Activated CD4-positive, alpha-beta T cell treated with anti-CD3 and anti-CD28 coated beads for 36 hours (primary cell): ENCODE measurements at regions of chr9 and their contacts with region 1.

Region 1: DNA sequence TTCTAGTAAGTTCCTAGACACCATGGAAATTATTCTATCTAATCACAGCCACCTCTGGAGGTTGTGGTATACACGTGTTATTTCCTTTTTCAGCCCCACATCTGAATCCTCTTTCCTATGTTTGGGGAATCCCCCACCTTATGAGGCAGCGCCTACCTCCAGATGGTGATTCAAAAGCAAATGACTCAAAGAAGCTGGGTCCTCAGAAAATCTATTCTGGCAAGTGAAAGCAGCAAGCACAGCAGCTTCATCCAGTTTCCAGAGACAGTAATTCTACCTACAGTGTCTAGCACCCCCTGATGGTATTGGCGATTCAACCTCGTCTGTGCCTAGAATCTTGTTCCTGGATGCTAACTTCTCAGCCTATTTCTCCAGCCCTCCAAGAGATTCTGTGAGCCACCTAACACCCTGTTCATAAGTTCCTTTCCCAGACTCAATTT is 43.0 kb downstream of the STRBP start:
- DNase-seq: peak; percentile 76
- ATAC-seq: peak; percentile 95
- H3K4me3 Mint-ChIP-seq: peak overlapping the region; percentile 27
- H3K27ac Mint-ChIP-seq: peak overlapping the region; percentile 86
- H3K4me1 Mint-ChIP-seq: peaks cover 30% of the 10 kb centered on the region
- H3K27me3 Mint-ChIP-seq: no peaks in the 10 kb centered on the region

Region 2: DNA sequence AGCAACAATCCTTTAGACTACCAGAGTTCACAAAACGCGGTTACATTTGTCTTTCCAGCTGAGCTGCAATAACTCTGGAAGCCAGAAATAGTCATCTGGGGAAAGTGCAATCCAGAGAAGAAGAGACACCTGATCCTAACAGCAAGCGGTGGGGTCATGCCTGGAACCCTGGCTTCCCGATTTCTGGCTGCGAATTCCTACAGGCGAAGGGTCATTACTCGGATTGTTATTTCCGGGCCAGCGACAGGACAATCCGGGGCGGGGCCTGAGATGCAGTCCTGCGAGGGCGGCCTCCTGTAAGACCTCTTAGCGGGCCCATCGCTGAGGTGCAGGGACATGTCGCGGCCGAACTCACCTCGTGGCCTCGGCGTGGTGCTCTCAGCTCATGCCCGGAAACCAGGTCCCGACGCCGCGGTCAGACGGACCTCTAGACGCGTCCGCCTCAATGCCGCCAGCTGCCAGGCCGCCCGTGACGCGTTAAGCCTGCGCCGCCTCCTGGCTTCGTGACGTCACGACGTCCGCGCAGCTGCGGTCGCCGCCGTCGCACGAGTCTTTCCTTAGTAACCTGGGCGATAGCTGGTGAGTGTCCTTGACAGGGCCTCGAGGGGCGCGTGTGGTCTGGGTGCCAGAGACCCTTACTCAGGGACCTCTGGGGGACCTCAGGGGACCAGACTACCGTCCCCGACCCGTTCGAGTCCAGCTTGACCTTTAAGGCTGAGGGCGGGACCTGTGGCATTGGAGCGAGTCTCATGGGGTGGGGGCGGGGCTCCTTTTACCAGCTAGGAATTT is 960.8 kb before region 1 on chr9 and contains the starts of genes MRRF and RBM18:
- CTCF ChIA-PET with region 1: no interaction called
- POLR2A ChIA-PET with region 1: no interaction called
- intact Hi-C with region 1: loop called in 1 of 2 experiments (anchors 10 kb)
- DNase-seq: peak; percentile 93
- ATAC-seq: peak; percentile 83
- H3K4me3 Mint-ChIP-seq: peak within 1 kb of the TSS; percentile 98
- H3K27ac Mint-ChIP-seq: peak within 1 kb of the TSS; percentile 99
- H3K4me1 Mint-ChIP-seq: peaks cover 44% of the 10 kb centered on the region
- H3K27me3 Mint-ChIP-seq: no peaks in the 10 kb centered on the region
- total RNA-seq, gene MRRF: 57.3 to 61.5 TPM
- total RNA-seq, gene RBM18: 22.3 to 28.6 TPM

Region 3: DNA sequence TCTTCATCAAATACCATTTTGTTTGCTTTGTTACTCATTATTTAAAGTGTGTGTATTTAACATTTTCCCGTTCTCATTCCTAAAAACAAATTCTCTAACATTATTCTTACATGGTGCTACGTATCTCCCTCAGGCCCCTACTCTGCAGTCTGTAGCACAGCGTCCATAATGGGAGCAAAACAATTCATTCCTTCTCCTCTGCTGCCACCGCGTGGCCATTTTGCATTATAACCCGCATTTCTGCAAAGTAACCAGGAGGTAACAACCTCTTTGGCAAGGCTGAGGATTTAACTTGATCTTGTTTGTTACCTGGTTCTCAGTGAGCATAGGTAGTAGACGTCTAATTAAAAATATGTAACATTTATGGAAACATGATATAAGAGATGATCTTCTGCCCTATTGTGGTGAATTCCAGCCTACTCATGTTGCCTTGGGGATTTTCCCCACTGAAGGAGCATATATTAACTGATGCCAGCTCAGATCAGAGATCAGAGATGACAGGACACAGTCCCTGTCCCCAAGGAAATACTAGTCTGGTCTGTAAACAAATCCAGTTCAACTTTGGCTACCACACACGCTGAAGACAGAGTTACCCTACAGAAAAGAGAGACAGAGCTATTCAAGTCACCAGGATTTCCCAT is 415.0 kb before region 1 on chr9:
- CTCF ChIA-PET with region 1: no interaction called
- POLR2A ChIA-PET with region 1: no interaction called
- intact Hi-C with region 1: loop called in 1 of 2 experiments (anchors 1 kb)
- DNase-seq: peak; percentile 86
- ATAC-seq: peak; percentile 45
- H3K4me3 Mint-ChIP-seq: no peak overlapping the region
- H3K27ac Mint-ChIP-seq: no peak overlapping the region
- H3K4me1 Mint-ChIP-seq: peaks cover 29% of the 10 kb centered on the region
- H3K27me3 Mint-ChIP-seq: no peaks in the 10 kb centered on the region

Region 4: DNA sequence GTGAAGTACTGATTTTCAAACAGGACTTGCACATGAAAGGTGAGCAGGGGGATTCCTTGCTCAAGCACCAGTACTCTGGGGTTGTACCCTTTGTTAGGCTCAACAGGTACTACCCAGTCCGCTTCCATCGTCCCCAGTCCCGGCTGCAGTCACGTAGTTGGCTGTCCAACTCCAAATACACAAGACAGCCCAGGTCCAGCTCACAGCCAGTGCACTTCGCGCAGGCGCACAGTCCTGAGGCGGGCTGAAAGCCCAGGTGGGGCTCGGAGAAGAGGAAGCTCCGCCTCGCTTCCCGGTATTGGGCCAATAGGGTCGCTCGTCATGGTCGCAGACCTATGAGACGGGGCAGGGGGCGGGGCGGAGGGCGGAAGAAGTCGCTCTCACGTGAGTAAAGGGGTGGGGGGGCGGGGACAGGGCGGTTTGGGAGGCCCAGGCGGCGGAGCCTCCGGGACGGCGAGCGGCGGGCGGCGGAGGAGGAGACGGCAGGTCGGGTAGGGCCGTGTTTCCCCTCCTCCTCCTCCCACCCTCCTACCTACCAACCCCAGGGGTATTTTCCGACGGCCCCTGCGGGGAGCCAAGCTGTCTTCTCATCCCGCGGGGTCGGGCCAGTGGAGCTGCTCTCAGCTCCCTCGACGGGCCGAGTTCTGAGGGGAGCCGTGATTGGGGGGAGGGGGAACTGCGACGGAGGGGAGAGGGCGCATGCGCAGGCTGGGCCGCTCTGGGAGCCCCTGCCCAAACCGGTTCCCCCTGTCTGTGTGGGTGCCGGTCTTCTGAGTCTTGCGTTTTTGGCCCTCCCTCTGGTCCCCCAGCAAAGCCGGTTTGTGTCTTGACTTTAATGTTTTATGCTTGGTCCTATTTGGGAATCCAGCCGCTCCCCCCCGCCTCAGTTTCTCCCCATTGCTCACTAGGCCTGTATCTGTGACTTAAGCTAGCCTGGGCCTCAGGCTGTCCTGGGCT is 284.5 kb before region 1 on chr9 and contains the start of gene RABGAP1:
- CTCF ChIA-PET with region 1: no interaction called
- POLR2A ChIA-PET with region 1: no interaction called
- intact Hi-C with region 1: loop called in 1 of 2 experiments (anchors 10 kb)
- DNase-seq: peak; percentile 99
- ATAC-seq: peak; percentile 99
- H3K4me3 Mint-ChIP-seq: peak within 1 kb of the TSS; percentile 99
- H3K27ac Mint-ChIP-seq: peak within 1 kb of the TSS; percentile 95
- H3K4me1 Mint-ChIP-seq: peaks cover 33% of the 10 kb centered on the region
- H3K27me3 Mint-ChIP-seq: no peaks in the 10 kb centered on the region
- total RNA-seq, gene RABGAP1: 24.3 to 27.2 TPM

Region 5: GRCh38 chr9:123102375-123103110 is 122.9 kb before region 1 on chr9:
- CTCF ChIA-PET with region 1: interaction called, 17 read pairs
- POLR2A ChIA-PET with region 1: no interaction called
- intact Hi-C with region 1: loop called in 1 of 2 experiments (anchors 10 kb)
- DNase-seq: no peak
- ATAC-seq: no peak
- H3K4me3 Mint-ChIP-seq: no peak overlapping the region
- H3K27ac Mint-ChIP-seq: no peak overlapping the region
- H3K4me1 Mint-ChIP-seq: no peaks in the 10 kb centered on the region
- H3K27me3 Mint-ChIP-seq: no peaks in the 10 kb centered on the region

Region 6: DNA sequence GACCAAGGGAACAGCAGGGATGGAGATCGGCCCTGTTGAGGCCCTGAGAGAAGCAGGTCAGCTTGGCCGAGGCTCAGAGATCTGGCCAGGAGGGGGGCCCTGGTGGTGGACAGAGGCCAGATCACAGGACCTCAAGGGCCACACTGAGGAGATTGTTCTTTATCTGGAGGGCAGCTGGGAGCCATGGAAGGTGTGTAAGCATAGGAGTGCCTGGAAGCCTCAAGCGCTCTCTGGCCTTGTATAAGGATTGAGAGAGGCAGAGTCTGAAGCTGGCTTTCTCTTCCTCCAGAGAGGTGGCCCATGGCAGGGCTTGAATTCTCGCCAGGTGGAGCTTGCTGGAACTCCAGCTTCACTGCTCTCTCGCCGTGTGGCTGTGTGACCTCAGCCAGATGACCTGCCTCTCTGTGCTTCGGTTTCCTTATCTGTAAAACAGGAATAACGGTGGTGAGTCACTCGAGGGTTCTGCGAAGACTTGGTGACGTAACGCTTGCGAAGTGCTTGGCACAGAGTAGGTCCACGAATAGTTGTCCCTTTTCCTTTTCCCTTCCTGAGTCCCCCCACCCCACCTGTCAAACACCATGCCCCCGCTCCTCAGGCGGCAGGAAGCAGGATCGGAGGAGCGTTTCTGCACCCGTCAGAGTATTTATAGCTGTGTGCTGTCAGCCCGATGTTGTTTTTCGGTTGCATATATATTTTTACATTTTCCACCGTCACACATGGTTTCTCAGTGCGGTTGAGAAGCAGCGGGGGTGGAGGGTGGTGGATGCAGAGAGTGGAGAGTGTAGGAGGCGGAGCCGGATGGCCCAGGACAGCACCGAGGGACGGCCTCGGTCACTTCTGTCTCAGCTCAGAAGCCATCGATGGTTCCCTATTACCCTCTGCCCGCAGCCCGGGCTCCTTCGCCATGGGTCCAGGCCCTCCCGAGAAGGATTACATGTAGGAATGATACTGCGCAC is 113.6 kb after region 1 on chr9:
- CTCF ChIA-PET with region 1: interaction called, 4 read pairs
- POLR2A ChIA-PET with region 1: no interaction called
- intact Hi-C with region 1: loop called (anchors 1 kb)
- DNase-seq: peak; percentile 87
- ATAC-seq: peak; percentile 75
- H3K4me3 Mint-ChIP-seq: peak overlapping the region; percentile 62
- H3K27ac Mint-ChIP-seq: peak overlapping the region; percentile 99
- H3K4me1 Mint-ChIP-seq: peaks cover 35% of the 10 kb centered on the region
- H3K27me3 Mint-ChIP-seq: no peaks in the 10 kb centered on the region